GM12878 (cell line): ENCODE measurements at regions of chr12 and their contacts with region 1.

Region 1: GRCh38 chr12:22443379-22444316 is 100.7 kb downstream of the C2CD5 start:
- DNase-seq: peak; percentile 15
- ATAC-seq: peak; percentile 100
- H3K4me3 ChIP-seq: no peak overlapping the region
- H3K27ac ChIP-seq: no peak overlapping the region
- H3K4me1 ChIP-seq: no peaks in the 10 kb centered on the region
- H3K27me3 ChIP-seq: no peaks in the 10 kb centered on the region
- CTCF ChIP-seq: peak; percentile 75 to 94 (median 80)
- EP300 ChIP-seq: no peak
- POLR2A ChIP-seq: no peak
- RAD21 ChIP-seq: peak; percentile 98

Region 2: GRCh38 chr12:21697904-21698630 is 745.6 kb before region 1 on chr12:
- CTCF ChIA-PET with region 1: interaction called, 27 read pairs
- POLR2A ChIA-PET with region 1: no interaction called
- RAD21 ChIA-PET with region 1: interaction called, 12 read pairs
- SMC1A ChIA-PET with region 1: interaction called, 5 read pairs
- in situ Hi-C with region 1: loop called (anchors 10 kb)
- intact Hi-C with region 1: no loop called
- DNase-seq: no peak
- ATAC-seq: no peak
- H3K4me3 ChIP-seq: no peak overlapping the region
- H3K27ac ChIP-seq: no peak overlapping the region
- H3K4me1 ChIP-seq: no peaks in the 10 kb centered on the region
- H3K27me3 ChIP-seq: no peaks in the 10 kb centered on the region
- CTCF ChIP-seq: peak; percentile 13 to 54 (median 39); a peak in 4 of 6 replicates
- EP300 ChIP-seq: no peak
- POLR2A ChIP-seq: no peak
- RAD21 ChIP-seq: peak; percentile 53

Region 3: GRCh38 chr12:22100958-22101748 is 342.5 kb before region 1 on chr12:
- CTCF ChIA-PET with region 1: interaction called, 21 read pairs
- POLR2A ChIA-PET with region 1: no interaction called
- RAD21 ChIA-PET with region 1: interaction called, 8 read pairs
- SMC1A ChIA-PET with region 1: no interaction called
- in situ Hi-C with region 1: loop called (anchors 10 kb)
- intact Hi-C with region 1: loop called (anchors 1 kb)
- DNase-seq: peak; percentile 13
- ATAC-seq: peak; percentile 86
- H3K4me3 ChIP-seq: no peak overlapping the region
- H3K27ac ChIP-seq: no peak overlapping the region
- H3K4me1 ChIP-seq: peaks cover 2% of the 10 kb centered on the region; the same call in 1 of the 2 replicates
- H3K27me3 ChIP-seq: no peaks in the 10 kb centered on the region
- CTCF ChIP-seq: peak; percentile 49 to 58 (median 56); a peak in 5 of 6 replicates
- EP300 ChIP-seq: no peak
- POLR2A ChIP-seq: no peak
- RAD21 ChIP-seq: peak; percentile 63

Region 4: GRCh38 chr12:22262309-22262708 is 181.3 kb before region 1 on chr12:
- CTCF ChIA-PET with region 1: no interaction called
- POLR2A ChIA-PET with region 1: interaction called, 4 read pairs
- RAD21 ChIA-PET with region 1: no interaction called
- SMC1A ChIA-PET with region 1: no interaction called
- in situ Hi-C with region 1: no loop called
- intact Hi-C with region 1: loop called (anchors 10 kb)
- DNase-seq: no peak
- ATAC-seq: no peak
- H3K4me3 ChIP-seq: no peak overlapping the region
- H3K27ac ChIP-seq: no peak overlapping the region
- H3K4me1 ChIP-seq: no peaks in the 10 kb centered on the region
- H3K27me3 ChIP-seq: no peaks in the 10 kb centered on the region
- CTCF ChIP-seq: no peak
- EP300 ChIP-seq: no peak
- POLR2A ChIP-seq: no peak
- RAD21 ChIP-seq: no peak

Region 5: DNA sequence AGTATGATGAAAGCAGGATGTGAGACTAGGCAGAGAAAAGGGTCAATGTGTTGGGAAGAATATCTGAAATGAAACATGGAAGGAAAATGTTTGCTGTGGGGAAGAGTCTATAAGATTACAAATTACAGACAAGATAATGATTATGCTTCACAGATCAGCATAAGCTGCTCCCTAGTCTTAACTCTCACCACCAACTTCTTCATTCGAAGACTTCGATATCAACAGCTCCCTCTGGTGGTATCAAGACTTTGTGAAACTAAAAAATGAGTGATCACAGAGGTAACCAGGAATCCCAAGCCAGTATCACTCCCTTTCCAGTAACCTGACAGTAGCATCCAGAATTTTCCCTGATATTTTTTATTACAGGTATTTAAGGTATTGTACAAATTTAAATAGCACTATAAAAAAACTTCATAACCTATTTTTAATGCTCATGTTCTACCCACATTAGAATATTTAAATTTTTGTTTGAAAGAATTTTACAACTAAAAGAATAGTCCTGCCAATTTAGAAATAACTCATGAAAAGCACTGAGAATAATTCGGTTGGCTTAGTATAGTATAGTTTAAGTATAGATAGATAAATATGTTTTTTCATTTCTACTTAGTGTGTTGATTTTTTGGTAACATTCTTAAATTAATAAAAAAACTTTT is 16.3 kb after region 1 on chr12:
- CTCF ChIA-PET with region 1: interaction called, 72 read pairs
- POLR2A ChIA-PET with region 1: no interaction called
- RAD21 ChIA-PET with region 1: interaction called, 3 read pairs
- SMC1A ChIA-PET with region 1: interaction called, 10 read pairs
- in situ Hi-C with region 1: no loop called
- intact Hi-C with region 1: no loop called
- DNase-seq: no peak
- ATAC-seq: peak; percentile 85
- H3K4me3 ChIP-seq: no peak overlapping the region
- H3K27ac ChIP-seq: no peak overlapping the region
- H3K4me1 ChIP-seq: no peaks in the 10 kb centered on the region
- H3K27me3 ChIP-seq: no peaks in the 10 kb centered on the region
- CTCF ChIP-seq: peak; percentile 52 to 61 (median 59)
- EP300 ChIP-seq: no peak
- POLR2A ChIP-seq: no peak
- RAD21 ChIP-seq: peak; percentile 41; the same call in 1 of the 2 replicates